BJ (cell line): ENCODE measurements at regions of chr20 and their contacts with region 1.

Region 1: GRCh38 chr20:4227085-4227821 is 211.9 kb upstream of the RNF24 start:
- DNase-seq: peak; percentile 30
- H3K4me3 ChIP-seq: no peak overlapping the region
- H3K27me3 ChIP-seq: no peaks in the 10 kb centered on the region
- CTCF ChIP-seq: peak; percentile 73

Region 2: GRCh38 chr20:4162766-4163165 is 64.5 kb before region 1 on chr20:
- CTCF ChIA-PET with region 1: no interaction called
- POLR2A ChIA-PET with region 1: interaction called, 12 read pairs
- DNase-seq: no peak
- H3K4me3 ChIP-seq: no peak overlapping the region
- H3K27me3 ChIP-seq: no peaks in the 10 kb centered on the region
- CTCF ChIP-seq: no peak

Region 3: GRCh38 chr20:4684837-4685413 is 457.7 kb after region 1 on chr20:
- CTCF ChIA-PET with region 1: no interaction called
- POLR2A ChIA-PET with region 1: no interaction called
- DNase-seq: no peak
- H3K4me3 ChIP-seq: no peak overlapping the region
- H3K27me3 ChIP-seq: no peaks in the 10 kb centered on the region
- CTCF ChIP-seq: no peak